Activated CD4-positive, alpha-beta memory T cell treated with anti-CD3 and anti-CD28 coated beads for 36 hours (primary cell): ENCODE measurements at regions of chr2 and their contacts with region 1.

Region 1: GRCh38 chr2:131413148-131413747 is 49.3 kb upstream of the RAB6D start:
- DNase-seq: no peak
- H3K4me3 Mint-ChIP-seq: no peak overlapping the region
- H3K27ac Mint-ChIP-seq: no peak overlapping the region
- H3K4me1 Mint-ChIP-seq: no peaks in the 10 kb centered on the region
- H3K27me3 Mint-ChIP-seq: peaks cover 49% of the 10 kb centered on the region

Region 2: DNA sequence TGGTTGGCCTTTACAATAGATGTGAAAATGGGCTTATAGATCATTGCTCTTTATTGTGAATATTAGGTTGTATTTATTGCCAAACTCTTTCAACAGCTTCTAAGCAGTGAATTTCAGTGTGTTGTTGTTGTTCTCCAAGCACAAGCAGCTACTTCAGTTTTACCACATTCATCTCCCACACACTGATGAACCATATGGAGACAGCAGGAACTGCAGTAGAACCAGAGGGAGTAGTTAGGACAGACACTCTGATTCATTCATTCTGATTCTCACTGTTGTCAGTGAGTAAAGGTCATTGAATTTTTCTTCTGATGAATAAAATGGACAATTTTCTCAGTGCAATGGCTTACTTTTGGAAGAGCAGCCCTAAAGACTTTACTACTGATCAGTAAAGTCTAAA is 154.6 kb after region 1 on chr2:
- CTCF ChIA-PET with region 1: no interaction called
- POLR2A ChIA-PET with region 1: no interaction called
- intact Hi-C with region 1: no loop called
- DNase-seq: no peak
- H3K4me3 Mint-ChIP-seq: no peak overlapping the region
- H3K27ac Mint-ChIP-seq: no peak overlapping the region
- H3K4me1 Mint-ChIP-seq: no peaks in the 10 kb centered on the region
- H3K27me3 Mint-ChIP-seq: peaks cover 39% of the 10 kb centered on the region

Region 3: DNA sequence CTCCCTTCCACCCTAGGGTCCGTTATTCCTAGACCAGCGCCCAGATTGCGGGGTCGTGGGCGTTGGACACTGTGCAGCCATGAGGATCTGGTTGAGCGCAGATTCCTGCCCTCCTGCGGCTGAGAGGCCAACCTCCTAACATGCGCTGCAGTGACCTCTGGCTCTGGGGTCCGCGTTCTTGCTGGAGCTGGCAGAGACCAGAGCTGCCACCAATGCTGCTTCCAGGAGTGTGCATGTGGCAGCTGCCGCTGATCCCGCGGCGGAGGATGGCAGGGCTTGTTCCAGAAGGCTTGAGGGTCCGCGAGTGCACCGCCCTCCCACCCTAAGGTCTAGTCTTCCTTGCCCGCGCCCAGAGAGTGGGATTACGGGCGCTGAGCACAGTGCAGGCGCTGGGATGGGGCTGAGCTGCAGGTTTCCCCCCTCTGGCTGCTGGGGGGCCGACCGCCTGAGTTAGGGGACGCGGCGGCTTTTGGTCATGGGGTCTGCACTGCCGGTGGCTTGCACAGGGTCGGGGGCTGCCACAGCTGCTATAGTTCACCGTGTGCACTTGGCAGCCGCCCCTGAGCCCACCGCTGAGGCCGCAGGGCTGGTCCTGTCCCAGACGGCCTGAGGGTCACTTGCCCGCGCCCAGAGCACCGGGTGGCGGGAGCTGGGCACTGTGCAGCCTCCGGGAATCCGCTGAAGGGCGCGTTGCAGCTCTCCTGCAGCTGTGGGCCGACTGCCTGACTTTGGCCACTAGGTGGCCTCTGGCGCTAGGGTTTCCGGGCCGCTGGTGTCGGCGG is 260.3 kb after region 1 on chr2:
- CTCF ChIA-PET with region 1: interaction called, 35 read pairs
- POLR2A ChIA-PET with region 1: no interaction called
- intact Hi-C with region 1: loop called (anchors 1 kb)
- DNase-seq: peak; percentile 82
- H3K4me3 Mint-ChIP-seq: peak overlapping the region; percentile 20
- H3K27ac Mint-ChIP-seq: no peak overlapping the region
- H3K4me1 Mint-ChIP-seq: peaks cover 2% of the 10 kb centered on the region
- H3K27me3 Mint-ChIP-seq: peaks cover 27% of the 10 kb centered on the region